ENCODE measurements at regions of chr3 and their contacts with region 1.

Region 1: GRCh38 chr3:169668957-169669681 is 5.6 kb upstream of the MECOM start:
- DNase-seq: no peak
- ATAC-seq: peak; percentile 97
- H3K4me3 ChIP-seq: peak overlapping the region; percentile 24 to 55
- H3K27ac ChIP-seq: no peak overlapping the region
- H3K4me1 ChIP-seq: peaks cover 11% of the 10 kb centered on the region
- H3K27me3 ChIP-seq: peaks cover 68% of the 10 kb centered on the region
- CTCF ChIP-seq: peak; percentile 95

Region 2: DNA sequence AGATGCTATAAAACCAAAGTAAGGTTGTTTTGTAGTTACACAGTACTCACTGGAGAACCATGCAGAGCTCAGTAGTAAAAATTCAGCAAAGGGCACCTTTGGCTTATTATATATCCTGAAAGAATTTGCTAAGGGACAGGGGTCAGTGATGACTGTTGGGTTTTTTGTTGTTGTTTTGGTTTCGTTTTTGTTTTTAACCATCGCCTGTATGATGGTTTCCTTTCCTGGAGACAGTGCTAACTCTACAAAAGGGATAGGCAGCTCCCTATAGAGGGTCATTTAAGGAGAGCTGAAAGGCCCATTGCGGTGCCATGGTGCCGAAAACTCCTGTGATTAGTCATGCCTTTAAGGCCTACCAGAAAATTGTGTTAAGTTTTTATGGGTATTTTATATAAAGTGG is 1455.2 kb before region 1 on chr3:
- CTCF ChIA-PET with region 1: no interaction called
- POLR2A ChIA-PET with region 1: no interaction called
- in situ Hi-C with region 1: no loop called
- intact Hi-C with region 1: loop called (anchors 10 kb)
- DNase-seq: no peak
- ATAC-seq: peak; percentile 65; the same call in 1 of the 2 replicates
- H3K4me3 ChIP-seq: peak overlapping the region in 1 of 2 experiments; percentile 7; a peak in 1 of 4 replicates
- H3K27ac ChIP-seq: no peak overlapping the region
- H3K4me1 ChIP-seq: no peaks in the 10 kb centered on the region; the same call in 1 of the 2 replicates
- H3K27me3 ChIP-seq: no peaks in the 10 kb centered on the region
- CTCF ChIP-seq: no peak

Region 3: DNA sequence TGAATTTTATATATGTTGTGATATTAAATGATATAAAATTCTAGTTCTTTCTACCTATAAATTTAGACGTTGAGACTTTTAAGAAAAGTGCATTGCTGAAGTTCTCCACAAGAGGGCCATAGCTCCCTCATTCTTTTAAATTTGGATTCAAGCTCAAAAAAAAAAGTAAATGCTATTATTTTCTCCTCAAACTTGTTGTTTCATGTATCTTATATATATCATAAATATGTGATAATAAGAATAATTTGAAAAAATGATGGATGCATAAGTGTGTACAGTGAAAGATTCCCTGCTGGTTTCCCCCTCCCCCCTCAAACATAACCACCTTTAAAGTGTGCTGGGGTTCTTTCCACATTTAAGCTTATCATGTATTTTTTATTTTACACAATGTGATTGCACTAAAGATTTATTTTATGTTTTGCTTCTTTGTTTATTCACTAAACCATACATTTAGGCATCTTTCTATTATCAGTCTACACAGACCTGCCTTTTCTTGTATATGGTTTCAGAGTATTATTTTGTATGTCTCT is 804.0 kb before region 1 on chr3:
- CTCF ChIA-PET with region 1: interaction called, 10 read pairs
- POLR2A ChIA-PET with region 1: no interaction called
- in situ Hi-C with region 1: no loop called
- intact Hi-C with region 1: loop called (anchors 5 kb)
- DNase-seq: no peak
- ATAC-seq: no peak
- H3K4me3 ChIP-seq: no peak overlapping the region
- H3K27ac ChIP-seq: no peak overlapping the region
- H3K4me1 ChIP-seq: no peaks in the 10 kb centered on the region
- H3K27me3 ChIP-seq: no peaks in the 10 kb centered on the region
- CTCF ChIP-seq: peak; percentile 79; the same call in 1 of the 2 replicates

Region 4: DNA sequence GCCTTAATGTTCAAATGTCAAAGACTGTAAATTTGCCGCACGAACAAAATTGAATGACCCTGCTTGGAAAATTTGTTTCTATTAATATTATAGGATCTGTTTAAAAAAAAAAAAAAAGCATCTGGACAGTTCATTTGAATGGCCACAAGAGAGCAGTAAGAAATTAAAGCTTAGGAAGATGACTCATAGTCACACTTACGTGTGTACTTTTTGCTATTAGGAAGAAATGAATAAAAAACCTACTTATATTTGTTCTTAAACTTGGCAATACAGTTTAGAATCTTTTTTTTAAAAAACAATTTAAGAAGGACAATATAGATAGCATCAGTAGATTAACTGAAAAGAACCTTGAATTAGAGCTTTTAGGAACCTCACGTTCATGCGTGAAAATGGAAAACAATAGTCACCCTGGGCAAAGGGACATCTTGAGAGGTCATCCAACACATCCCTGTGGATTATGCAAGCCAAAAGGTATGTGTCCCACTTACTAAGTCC is 627.4 kb before region 1 on chr3:
- CTCF ChIA-PET with region 1: no interaction called
- POLR2A ChIA-PET with region 1: no interaction called
- in situ Hi-C with region 1: no loop called
- intact Hi-C with region 1: loop called (anchors 5 kb)
- DNase-seq: peak; percentile 38
- ATAC-seq: no peak
- H3K4me3 ChIP-seq: no peak overlapping the region
- H3K27ac ChIP-seq: no peak overlapping the region
- H3K4me1 ChIP-seq: no peaks in the 10 kb centered on the region
- H3K27me3 ChIP-seq: no peaks in the 10 kb centered on the region
- CTCF ChIP-seq: peak; percentile 49; the same call in 1 of the 2 replicates

Region 5: GRCh38 chr3:169133178-169134161 is 535.6 kb before region 1 on chr3:
- CTCF ChIA-PET with region 1: no interaction called
- POLR2A ChIA-PET with region 1: no interaction called
- in situ Hi-C with region 1: no loop called
- intact Hi-C with region 1: loop called (anchors 5 kb)
- DNase-seq: no peak
- ATAC-seq: no peak
- H3K4me3 ChIP-seq: no peak overlapping the region
- H3K27ac ChIP-seq: no peak overlapping the region
- H3K4me1 ChIP-seq: no peaks in the 10 kb centered on the region
- H3K27me3 ChIP-seq: peaks cover 5% of the 10 kb centered on the region
- CTCF ChIP-seq: peak; percentile 49; the same call in 1 of the 2 replicates

Region 6: GRCh38 chr3:169149349-169149890 is 519.7 kb before region 1 on chr3:
- CTCF ChIA-PET with region 1: interaction called, 14 read pairs
- POLR2A ChIA-PET with region 1: no interaction called
- in situ Hi-C with region 1: no loop called
- intact Hi-C with region 1: loop called (anchors 2 kb)
- DNase-seq: peak; percentile 41
- ATAC-seq: peak; percentile 96
- H3K4me3 ChIP-seq: peak overlapping the region; percentile 17 to 39
- H3K27ac ChIP-seq: no peak overlapping the region
- H3K4me1 ChIP-seq: peaks cover 22% of the 10 kb centered on the region
- H3K27me3 ChIP-seq: peaks cover 56% of the 10 kb centered on the region
- CTCF ChIP-seq: peak; percentile 94

Region 7: DNA sequence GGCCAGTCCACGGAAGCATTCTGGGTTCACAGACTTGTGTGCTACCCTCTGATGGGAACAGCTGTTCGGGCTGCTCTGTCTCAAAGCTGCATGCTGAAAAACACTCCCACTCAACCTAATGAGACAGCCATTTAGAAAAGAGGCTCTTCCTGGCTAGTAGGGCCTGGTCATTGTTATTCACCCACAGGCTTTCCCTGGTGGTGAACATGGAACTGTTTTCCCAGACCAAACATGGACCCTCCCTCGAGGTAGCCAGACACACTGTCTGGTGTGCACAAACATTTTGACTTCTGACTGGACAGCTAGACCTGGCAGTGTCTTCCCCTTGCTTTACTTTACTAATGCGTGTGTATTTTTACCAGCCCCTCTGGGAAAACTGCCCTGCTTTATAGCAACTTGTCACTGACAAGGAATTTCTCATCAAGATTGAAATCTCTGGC is 44.6 kb before region 1 on chr3:
- CTCF ChIA-PET with region 1: no interaction called
- POLR2A ChIA-PET with region 1: no interaction called
- in situ Hi-C with region 1: no loop called
- intact Hi-C with region 1: no loop called
- DNase-seq: no peak
- ATAC-seq: no peak
- H3K4me3 ChIP-seq: no peak overlapping the region
- H3K27ac ChIP-seq: no peak overlapping the region
- H3K4me1 ChIP-seq: no peaks in the 10 kb centered on the region
- H3K27me3 ChIP-seq: peaks cover 5% of the 10 kb centered on the region
- CTCF ChIP-seq: no peak

Region 8: DNA sequence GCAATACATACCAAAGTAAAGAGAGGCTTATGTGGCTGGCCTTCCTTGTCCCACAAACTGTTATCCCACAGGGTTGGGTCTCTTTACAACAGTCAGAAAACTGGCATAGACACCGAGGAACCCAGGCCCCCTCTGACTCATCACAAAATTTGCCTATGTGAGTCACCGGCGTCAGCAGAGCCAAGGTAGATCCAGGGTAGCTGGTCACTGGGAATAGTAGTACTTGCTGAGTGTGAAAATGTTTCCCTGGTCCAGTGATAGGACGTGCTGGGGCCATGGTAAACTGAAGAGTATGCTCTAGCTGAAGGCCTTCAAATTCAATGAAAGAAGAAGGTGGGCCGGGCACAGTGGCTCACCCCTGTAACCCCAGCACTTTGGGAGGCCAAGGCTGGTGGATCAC is 661.2 kb after region 1 on chr3:
- CTCF ChIA-PET with region 1: no interaction called
- POLR2A ChIA-PET with region 1: no interaction called
- in situ Hi-C with region 1: no loop called
- intact Hi-C with region 1: no loop called
- DNase-seq: peak; percentile 30
- ATAC-seq: peak; percentile 83
- H3K4me3 ChIP-seq: no peak overlapping the region
- H3K27ac ChIP-seq: peak overlapping the region; percentile 26; the same call in 1 of the 2 replicates
- H3K4me1 ChIP-seq: peaks cover 5% of the 10 kb centered on the region; the same call in 1 of the 2 replicates
- H3K27me3 ChIP-seq: no peaks in the 10 kb centered on the region
- CTCF ChIP-seq: no peak